ENCODE measurements at regions of chr7 and their contacts with region 1.

Region 1: GRCh38 chr7:134690016-134690415 is 43.4 kb downstream of the BPGM start:
- DNase-seq: no peak
- ATAC-seq: peak; percentile 59
- H3K4me3 ChIP-seq: no peak overlapping the region
- H3K27ac ChIP-seq: no peak overlapping the region
- H3K4me1 ChIP-seq: no peaks in the 10 kb centered on the region
- H3K27me3 ChIP-seq: peaks cover 40 to 45% of the 10 kb centered on the region in 2 experiments
- CTCF ChIP-seq: peak; percentile 10 to 42 (median 31); a peak in 3 of 6 replicates
- EP300 ChIP-seq: no peak
- POLR2A ChIP-seq: no peak
- RAD21 ChIP-seq: peak; percentile 46 to 54

Region 2: DNA sequence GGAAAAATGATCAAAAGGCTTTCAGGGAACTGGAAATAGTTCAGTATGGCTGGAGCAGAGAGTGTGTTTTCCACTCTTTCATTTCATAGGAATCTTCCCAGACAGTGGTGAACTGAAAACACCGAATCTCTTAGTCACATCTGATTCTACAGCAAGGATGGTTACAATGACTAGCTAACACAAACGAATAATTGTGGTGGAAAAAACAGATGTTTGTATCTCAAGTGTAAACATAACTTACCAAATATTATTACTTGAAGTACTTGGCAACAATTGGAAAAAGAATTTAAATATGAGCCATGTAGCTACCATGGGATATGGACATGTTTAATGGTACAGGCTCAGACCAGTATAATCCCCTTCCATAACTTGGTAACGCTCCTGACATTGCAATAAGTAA is 64.5 kb before region 1 on chr7:
- CTCF ChIA-PET with region 1: no interaction called
- POLR2A ChIA-PET with region 1: no interaction called
- in situ Hi-C with region 1: no loop called
- intact Hi-C with region 1: no loop called
- DNase-seq: no peak
- ATAC-seq: no peak
- H3K4me3 ChIP-seq: no peak overlapping the region
- H3K27ac ChIP-seq: no peak overlapping the region
- H3K4me1 ChIP-seq: no peaks in the 10 kb centered on the region
- H3K27me3 ChIP-seq: peaks cover 0 to 9% of the 10 kb centered on the region in 2 experiments; a peak in 1 of 5 replicates
- CTCF ChIP-seq: no peak
- EP300 ChIP-seq: no peak
- POLR2A ChIP-seq: no peak
- RAD21 ChIP-seq: no peak

Region 3: DNA sequence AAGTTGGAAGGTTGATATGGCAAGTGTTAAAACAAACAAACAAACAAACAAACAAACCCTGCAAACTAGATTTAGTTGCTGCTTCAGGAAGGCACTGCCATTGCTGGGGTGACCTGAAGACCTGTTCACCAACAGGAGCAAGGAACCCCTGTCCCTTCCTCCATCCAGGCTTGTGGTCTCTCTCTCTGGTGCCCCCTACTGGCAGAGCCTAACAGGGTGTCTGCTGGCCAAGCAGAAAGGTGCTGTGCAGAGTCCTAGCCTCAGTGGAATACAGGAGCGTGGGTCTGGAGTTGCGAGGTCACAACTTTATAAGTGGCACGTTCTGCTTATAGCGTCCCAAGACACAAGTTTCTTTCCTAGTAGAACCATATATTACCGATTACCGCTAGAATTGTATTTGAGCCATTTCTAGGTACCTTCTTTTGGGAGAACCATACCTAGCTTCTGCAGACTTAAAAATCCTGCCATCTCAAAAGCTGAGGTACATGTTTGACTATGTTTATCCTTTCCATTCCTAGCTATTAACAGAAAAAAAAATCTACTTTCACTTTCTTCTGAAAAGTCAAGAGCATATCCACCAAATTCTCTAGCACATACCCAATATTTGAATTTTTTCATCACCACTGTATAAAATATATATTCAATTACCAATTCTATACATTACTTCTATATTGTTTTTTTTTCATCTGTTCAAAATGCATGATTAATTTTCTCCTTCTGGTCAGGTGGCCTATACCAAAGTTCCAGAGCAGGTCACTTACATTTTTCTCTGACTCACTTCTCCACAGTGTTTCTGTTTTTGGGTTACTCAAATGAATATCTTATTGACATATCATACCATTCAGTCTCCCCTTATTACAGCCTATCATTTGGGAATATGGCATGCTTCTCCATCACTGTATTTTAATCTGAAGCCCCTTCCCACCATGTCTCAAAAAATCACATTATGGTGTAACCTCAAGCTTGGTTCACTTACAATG is 60.4 kb after region 1 on chr7:
- CTCF ChIA-PET with region 1: no interaction called
- POLR2A ChIA-PET with region 1: no interaction called
- in situ Hi-C with region 1: no loop called
- intact Hi-C with region 1: loop called (anchors 5 kb)
- DNase-seq: peak; percentile 77 to 90 (median 86)
- ATAC-seq: peak; percentile 99
- H3K4me3 ChIP-seq: no peak overlapping the region
- H3K27ac ChIP-seq: no peak overlapping the region
- H3K4me1 ChIP-seq: no peaks in the 10 kb centered on the region
- H3K27me3 ChIP-seq: peaks cover 0 to 16% of the 10 kb centered on the region in 2 experiments; a peak in 3 of 5 replicates
- CTCF ChIP-seq: peak; percentile 86 to 99 (median 92)
- EP300 ChIP-seq: no peak
- POLR2A ChIP-seq: no peak
- RAD21 ChIP-seq: peak; percentile 29 to 68; a peak in 3 of 4 replicates

Region 4: GRCh38 chr7:134954197-134955082 is 264.4 kb after region 1 on chr7:
- CTCF ChIA-PET with region 1: interaction called, 7 read pairs
- POLR2A ChIA-PET with region 1: no interaction called
- in situ Hi-C with region 1: no loop called
- intact Hi-C with region 1: loop called (anchors 2 kb)
- DNase-seq: peak; percentile 35 to 50 (median 44)
- ATAC-seq: peak; percentile 80
- H3K4me3 ChIP-seq: no peak overlapping the region
- H3K27ac ChIP-seq: no peak overlapping the region
- H3K4me1 ChIP-seq: no peaks in the 10 kb centered on the region
- H3K27me3 ChIP-seq: peaks cover 0 to 15% of the 10 kb centered on the region in 2 experiments; a peak in 2 of 5 replicates
- CTCF ChIP-seq: peak; percentile 50 to 82 (median 64); a peak in 4 of 6 replicates
- EP300 ChIP-seq: no peak
- POLR2A ChIP-seq: no peak
- RAD21 ChIP-seq: peak; percentile 83 to 88

Measured in K562 (cell line).